Mammary epithelial cell (primary cell): ENCODE measurements at regions of chr10 and their contacts with region 1.

Region 1: DNA sequence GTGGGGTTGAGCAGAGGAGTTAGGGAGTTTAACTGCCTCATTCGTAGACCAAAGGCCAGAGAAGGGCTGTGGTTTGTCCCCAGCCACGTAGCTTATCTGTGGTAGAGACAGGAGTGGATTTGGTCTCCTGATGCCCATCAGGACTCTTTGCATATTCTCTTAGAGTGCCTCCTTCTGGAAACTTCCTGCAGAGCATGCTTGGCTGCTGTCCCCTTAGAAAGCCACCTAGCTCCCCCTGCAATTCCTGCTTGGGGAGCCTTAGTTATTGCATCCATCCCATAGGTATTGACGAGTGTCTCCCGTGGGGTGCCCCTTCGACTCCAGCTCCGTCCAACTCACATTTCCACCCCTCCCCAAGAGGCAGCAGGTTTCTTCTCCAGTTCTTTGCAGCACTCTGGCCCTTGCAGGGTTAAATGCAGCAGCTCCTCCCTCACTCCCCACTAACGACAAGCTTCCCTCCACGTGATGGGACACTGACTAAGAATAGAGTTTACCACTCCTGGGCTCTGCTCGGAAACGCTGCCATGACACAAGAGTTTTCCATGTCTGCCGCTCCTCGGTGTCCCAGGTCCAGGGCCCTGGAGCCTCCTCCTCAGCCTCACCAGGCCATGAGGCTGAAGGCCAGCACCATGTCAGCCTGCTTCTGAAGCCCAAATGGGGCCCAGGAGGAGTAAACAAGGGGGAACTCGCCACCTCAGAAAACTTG is 147.8 kb upstream of the UNC5B start:
- DNase-seq: no peak
- H3K4me3 ChIP-seq: no peak overlapping the region
- H3K27ac ChIP-seq: no peak overlapping the region
- H3K4me1 ChIP-seq: peaks cover 20% of the 10 kb centered on the region
- H3K27me3 ChIP-seq: peaks cover 4% of the 10 kb centered on the region
- CTCF ChIP-seq: peak in 1 of 2 donors; percentile 24

Region 2: GRCh38 chr10:70925377-70926225 is 139.0 kb before region 1 on chr10:
- CTCF ChIA-PET with region 1: no interaction called
- dilution Hi-C with region 1: no loop called
- in situ Hi-C with region 1: no loop called
- intact Hi-C with region 1: loop called (anchors 1 kb)
- DNase-seq: no peak
- H3K4me3 ChIP-seq: no peak overlapping the region
- H3K27ac ChIP-seq: no peak overlapping the region
- H3K4me1 ChIP-seq: peaks cover 6% of the 10 kb centered on the region
- H3K27me3 ChIP-seq: peaks cover 2% of the 10 kb centered on the region
- CTCF ChIP-seq: peak; percentile 79 to 96

Region 3: GRCh38 chr10:71025535-71025934 is 39.0 kb before region 1 on chr10:
- CTCF ChIA-PET with region 1: no interaction called
- dilution Hi-C with region 1: loop called (anchors 5 kb)
- in situ Hi-C with region 1: no loop called
- intact Hi-C with region 1: no loop called
- DNase-seq: peak; percentile 56
- H3K4me3 ChIP-seq: no peak overlapping the region
- H3K27ac ChIP-seq: no peak overlapping the region
- H3K4me1 ChIP-seq: no peaks in the 10 kb centered on the region
- H3K27me3 ChIP-seq: no peaks in the 10 kb centered on the region
- CTCF ChIP-seq: no peak